ENCODE measurements at regions of chr7 and their contacts with region 1.

Region 1: GRCh38 chr7:101308245-101309085 is 13.1 kb downstream of the IFT22 start:
- DNase-seq: peak; percentile 81 to 89
- ATAC-seq: peak; percentile 97
- H3K4me3 ChIP-seq: peak overlapping the region; percentile 81
- H3K27ac ChIP-seq: peak overlapping the region; percentile 86 to 94
- H3K4me1 ChIP-seq: peaks cover 4% of the 10 kb centered on the region; the same call in 2 of the 3 replicates
- CTCF ChIP-seq: no peak
- EP300 ChIP-seq: no peak
- POLR2A ChIP-seq: peak; percentile 73
- RAD21 ChIP-seq: no peak

Region 2: GRCh38 chr7:101321491-101322401 is 13.3 kb after region 1 on chr7 and contains the start of gene IFT22:
- CTCF ChIA-PET with region 1: interaction called, 11 read pairs
- POLR2A ChIA-PET with region 1: interaction called, 23 read pairs
- DNase-seq: peak; percentile 86 to 88
- ATAC-seq: peak; percentile 98 to 99
- H3K4me3 ChIP-seq: peak within 1 kb of the TSS; percentile 77
- H3K27ac ChIP-seq: peak within 1 kb of the TSS; percentile 94 to 95
- H3K4me1 ChIP-seq: peaks cover 6% of the 10 kb centered on the region; the same call in 1 of the 3 replicates
- CTCF ChIP-seq: peak; percentile 65
- EP300 ChIP-seq: no peak
- POLR2A ChIP-seq: peak; percentile 63
- RAD21 ChIP-seq: peak; percentile 69
- polyA plus RNA-seq, gene IFT22: 58.4 and 66.5 TPM in 2 replicates

Region 3: DNA sequence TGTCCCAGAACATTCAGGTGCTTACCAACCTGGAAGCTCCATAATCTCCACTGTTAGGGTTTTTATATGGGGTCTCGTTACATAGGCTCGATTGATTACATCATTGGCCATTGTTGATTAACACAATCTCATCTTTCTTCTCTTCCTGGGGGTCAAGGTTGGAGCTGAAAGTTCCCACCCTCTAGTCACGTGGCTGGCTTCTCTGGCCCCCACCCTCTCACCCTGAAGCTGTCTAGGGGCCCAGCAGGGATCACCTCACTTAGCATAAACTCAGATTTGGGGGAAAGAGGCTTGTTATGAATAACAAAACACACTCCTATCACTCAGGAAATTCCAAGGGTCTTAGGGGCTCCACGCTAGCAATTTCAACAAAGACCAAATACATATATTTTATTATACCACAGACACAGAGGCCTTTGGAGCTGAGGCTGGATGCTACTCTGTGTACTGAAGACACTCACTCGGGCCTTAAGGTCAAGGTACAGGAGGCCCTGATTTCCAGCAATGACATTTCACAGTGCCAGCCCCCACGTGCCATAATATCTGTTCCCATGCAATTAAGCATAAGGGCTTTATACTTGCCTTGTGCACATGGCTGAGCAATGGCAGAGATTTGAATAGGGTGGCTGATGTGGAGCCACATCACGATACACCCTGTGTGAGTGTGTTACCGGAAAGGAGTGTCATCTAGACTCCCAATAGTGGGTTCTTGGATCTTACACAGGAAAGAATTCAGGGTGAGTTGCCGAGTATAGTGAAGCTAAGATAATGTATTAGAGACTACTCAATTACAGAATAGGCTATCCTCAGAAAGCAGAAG is 162.4 kb after region 1 on chr7:
- CTCF ChIA-PET with region 1: no interaction called
- POLR2A ChIA-PET with region 1: no interaction called
- DNase-seq: no peak
- ATAC-seq: no peak
- H3K4me3 ChIP-seq: no peak overlapping the region
- H3K27ac ChIP-seq: no peak overlapping the region
- H3K4me1 ChIP-seq: no peaks in the 10 kb centered on the region
- CTCF ChIP-seq: no peak
- EP300 ChIP-seq: no peak
- POLR2A ChIP-seq: no peak
- RAD21 ChIP-seq: no peak

Region 4: GRCh38 chr7:101707587-101707986 is 399.1 kb after region 1 on chr7:
- CTCF ChIA-PET with region 1: no interaction called
- POLR2A ChIA-PET with region 1: no interaction called
- DNase-seq: no peak
- ATAC-seq: peak in 1 of 2 experiments; percentile 21; a peak in 1 of 6 replicates
- H3K4me3 ChIP-seq: no peak overlapping the region
- H3K27ac ChIP-seq: no peak overlapping the region
- H3K4me1 ChIP-seq: peaks cover 2% of the 10 kb centered on the region; the same call in 1 of the 3 replicates
- CTCF ChIP-seq: no peak
- EP300 ChIP-seq: no peak
- POLR2A ChIP-seq: no peak
- RAD21 ChIP-seq: no peak